Motor neuron (in vitro differentiated cells): ENCODE measurements at regions of chr15 and their contacts with region 1.

Region 1: DNA sequence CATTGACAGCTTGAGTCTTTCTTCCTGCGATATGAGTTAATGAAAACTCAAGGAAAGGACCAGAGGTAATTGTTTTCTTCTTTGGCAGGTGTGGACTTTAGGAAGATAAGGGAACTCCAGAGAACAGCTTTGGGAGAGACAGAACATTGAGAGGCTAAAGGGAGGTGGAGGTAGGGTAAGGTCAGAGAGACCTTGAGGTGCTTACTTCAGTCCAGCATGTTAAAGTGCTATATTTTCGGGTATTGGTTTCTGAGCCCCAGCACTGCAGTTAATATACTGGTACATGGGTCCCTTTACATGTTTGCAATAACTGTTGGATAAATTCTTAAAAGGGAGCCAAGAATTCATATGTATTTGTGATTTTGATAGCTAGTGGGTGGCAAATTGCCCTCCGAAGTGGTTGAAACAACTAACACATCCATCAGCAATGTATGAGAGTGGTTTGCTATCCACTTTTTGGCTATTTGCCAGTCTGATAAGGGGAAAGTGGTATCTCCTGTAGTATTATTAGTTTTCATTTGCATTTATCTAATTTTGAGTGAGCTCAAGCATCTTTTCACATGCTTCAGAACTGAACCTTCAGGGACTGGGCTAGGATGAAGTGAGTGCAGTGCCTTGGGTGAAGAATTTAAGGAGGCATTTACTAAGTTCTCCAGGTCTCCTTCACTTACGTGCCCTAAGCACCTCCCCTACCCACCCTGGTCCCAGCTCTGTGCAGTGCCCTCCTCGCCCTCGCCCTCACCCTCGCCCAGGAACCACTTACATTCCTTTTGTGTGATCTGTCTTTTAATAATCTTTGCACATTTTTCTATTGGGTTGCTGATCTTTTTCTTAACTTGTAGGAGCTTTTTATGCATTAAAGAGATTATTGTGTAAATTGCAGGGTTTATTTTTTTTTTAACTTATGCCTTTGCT is 322.4 kb downstream of the THSD4 start:
- ATAC-seq: no peak
- H3K4me3 ChIP-seq: no peak overlapping the region
- H3K27ac ChIP-seq: no peak overlapping the region
- H3K4me1 ChIP-seq: no peaks in the 10 kb centered on the region

Region 2: DNA sequence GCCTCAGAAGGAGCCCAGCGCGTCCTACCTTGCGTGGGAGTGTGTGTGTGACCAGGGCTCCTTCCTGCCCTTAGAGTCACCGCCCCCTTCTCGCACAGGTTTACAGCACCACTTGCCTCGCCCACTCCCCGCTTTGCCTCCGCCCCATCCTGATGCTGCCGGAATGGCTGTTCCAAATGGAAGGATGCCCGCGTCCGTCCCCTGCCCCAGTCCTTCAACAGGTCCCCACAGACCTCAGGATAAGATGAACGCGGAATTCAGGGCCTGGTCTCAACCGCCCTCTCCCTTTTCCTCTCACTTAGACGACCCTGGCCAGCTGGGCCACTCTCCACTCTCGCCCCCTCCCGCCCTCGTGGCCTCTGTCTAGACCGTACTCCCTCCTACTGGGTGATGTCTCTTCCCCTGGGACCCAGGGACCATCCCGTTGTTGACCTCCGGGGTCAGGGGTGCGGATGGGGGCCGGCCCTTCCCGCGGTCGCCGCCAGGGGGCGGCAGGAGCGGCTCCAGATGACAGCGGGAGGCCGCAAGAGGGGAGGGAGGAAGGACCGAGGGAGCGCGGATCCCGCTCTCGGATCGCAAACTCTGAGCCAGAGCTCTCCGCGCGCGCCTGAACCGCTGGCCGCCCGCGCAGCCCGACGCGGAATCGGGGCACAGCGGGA is 322.6 kb before region 1 on chr15 and contains the start of gene THSD4:
- in situ Hi-C with region 1: loop called in 3 of 9 experiments (anchors 10 to 25 kb)
- ATAC-seq: peak; percentile 79 to 86 (median 82)
- H3K4me3 ChIP-seq: peak within 1 kb of the TSS; percentile 51 to 86 (median 57)
- H3K27ac ChIP-seq: no peak within 1 kb of the TSS
- H3K4me1 ChIP-seq: peaks cover 10 to 29% of the 10 kb centered on the region in 2 donors
- total RNA-seq, gene THSD4: 1.3 to 28.4 (median 6.7) TPM

Region 3: DNA sequence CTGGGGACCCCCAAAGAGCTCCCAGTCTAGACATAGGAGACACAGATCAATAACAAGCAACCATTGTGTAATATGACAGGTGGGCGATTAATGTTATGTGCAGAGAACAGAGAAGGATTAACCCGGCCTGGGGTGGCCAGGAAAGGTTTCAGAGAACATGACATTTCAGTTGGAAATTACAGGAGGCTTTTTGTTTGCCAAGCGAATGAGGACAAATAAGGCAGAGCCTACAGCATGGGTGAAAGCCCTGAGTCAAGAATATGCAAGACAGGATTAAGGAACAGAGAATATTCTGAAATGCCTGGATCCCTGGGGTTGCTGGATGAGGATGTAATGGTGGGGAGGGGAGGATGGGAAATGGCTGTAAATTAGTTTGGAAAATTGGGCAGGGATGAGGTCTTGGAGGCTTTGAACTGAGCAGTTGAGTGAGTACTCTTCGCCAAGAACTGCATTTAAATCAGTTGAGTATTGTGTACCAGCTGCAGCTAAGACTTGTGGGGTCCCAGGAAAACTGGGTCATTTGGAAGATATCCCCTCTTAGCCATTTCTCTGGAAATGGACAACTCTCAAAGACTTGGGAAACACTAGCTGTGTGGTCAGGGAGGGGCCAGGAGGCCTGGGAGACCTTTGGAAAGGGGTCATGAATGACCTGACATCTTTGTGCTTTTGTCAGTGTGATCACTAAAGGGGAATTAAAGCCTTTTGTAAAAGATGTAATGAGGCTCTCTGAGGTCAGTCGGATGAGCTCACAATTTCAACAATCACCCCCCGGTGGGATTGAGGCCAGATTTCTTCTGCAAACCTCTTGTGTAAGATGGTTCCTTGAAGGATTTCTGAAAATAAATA is 174.1 kb after region 1 on chr15:
- in situ Hi-C with region 1: no loop called
- ATAC-seq: peak; percentile 7 to 82 (median 42)
- H3K4me3 ChIP-seq: no peak overlapping the region
- H3K27ac ChIP-seq: peak overlapping the region in 1 of 2 donors; percentile 14
- H3K4me1 ChIP-seq: peaks cover 20 to 34% of the 10 kb centered on the region in 2 donors